Activated CD8-positive, alpha-beta T cell treated with anti-CD3 and anti-CD28 coated beads for 36 hours (primary cell): ENCODE measurements at regions of chr1 and their contacts with region 1.

Region 1: DNA sequence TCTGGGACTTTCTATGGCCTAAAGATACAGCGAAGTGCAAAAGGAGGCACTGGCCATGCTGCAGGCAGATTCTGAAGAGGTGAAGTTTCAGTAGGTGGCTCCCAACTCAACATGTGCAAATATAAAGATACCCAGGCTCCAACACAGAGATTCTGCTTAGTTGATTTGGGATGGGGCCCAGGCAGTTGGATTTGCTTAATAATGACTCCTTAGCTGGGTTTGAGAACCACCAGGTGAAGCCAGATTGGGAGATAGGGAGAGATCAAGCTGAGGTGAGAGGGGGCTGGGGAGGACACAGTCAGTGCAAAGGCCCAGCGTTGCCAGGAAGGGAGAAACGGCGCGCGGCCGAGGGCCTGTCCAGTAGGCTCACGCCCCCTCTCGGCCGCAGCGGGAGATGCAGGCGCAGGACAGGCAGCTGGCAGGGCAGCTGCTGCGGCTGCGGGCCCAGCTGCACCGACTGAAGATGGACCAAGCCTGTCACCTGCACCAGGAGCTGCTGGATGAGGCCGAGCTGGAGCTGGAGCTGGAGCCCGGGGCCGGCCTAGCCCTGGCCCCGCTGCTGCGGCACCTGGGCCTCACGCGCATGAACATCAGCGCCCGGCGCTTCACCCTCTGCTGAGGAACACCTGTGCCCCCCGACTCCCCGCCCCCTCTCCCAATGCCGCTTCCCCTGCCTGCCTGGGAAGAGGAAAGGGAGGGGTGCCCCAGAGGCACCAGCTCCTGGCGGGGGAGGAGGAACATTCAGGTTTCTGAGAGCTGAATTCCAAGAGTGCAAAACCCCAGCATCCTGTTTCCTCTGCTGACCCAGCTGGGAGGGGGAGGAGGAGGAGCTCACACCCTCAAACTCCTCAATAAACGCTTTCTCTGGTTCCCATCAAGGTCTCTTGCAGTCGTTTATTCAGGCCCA is 1.2 kb downstream of the FAM167B start:
- DNase-seq: peak; percentile 92
- ATAC-seq: peak; percentile 21
- H3K4me3 Mint-ChIP-seq: peak overlapping the region; percentile 50
- H3K27ac Mint-ChIP-seq: peak overlapping the region; percentile 99
- H3K4me1 Mint-ChIP-seq: peaks cover 41% of the 10 kb centered on the region
- H3K27me3 Mint-ChIP-seq: no peaks in the 10 kb centered on the region
- CTCF ChIP-seq: peak; percentile 96

Region 2: DNA sequence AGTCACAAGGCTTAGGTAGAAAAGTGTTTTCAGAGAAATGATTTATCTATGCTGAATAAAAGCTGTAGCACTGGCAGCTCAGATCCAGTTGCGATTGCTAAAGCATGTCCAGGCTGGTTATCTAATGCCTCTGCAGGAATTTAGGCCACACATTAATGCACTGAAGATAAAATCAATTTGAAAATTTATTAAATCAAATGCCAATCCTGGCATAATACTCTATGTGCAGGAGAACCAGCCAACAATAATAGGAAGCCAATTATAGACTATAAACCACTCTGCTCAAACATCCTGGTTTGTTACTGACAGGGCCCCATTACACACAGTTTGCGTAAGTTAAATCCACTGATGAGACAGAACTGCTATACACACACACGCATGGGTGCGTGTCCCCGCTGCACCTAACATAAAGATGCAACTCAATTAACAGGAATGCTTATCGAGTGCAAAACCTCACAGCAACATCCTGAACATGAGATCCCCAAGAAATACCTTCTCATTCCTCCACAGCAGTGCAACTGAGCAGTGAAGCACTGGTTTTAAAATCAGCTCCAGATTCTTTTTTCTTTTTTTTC is 350.6 kb before region 1 on chr1:
- CTCF ChIA-PET with region 1: no interaction called
- POLR2A ChIA-PET with region 1: no interaction called
- intact Hi-C with region 1: no loop called
- DNase-seq: no peak
- ATAC-seq: no peak
- H3K4me3 Mint-ChIP-seq: no peak overlapping the region
- H3K27ac Mint-ChIP-seq: no peak overlapping the region
- H3K4me1 Mint-ChIP-seq: peaks cover 9% of the 10 kb centered on the region
- H3K27me3 Mint-ChIP-seq: no peaks in the 10 kb centered on the region
- CTCF ChIP-seq: no peak

Region 3: DNA sequence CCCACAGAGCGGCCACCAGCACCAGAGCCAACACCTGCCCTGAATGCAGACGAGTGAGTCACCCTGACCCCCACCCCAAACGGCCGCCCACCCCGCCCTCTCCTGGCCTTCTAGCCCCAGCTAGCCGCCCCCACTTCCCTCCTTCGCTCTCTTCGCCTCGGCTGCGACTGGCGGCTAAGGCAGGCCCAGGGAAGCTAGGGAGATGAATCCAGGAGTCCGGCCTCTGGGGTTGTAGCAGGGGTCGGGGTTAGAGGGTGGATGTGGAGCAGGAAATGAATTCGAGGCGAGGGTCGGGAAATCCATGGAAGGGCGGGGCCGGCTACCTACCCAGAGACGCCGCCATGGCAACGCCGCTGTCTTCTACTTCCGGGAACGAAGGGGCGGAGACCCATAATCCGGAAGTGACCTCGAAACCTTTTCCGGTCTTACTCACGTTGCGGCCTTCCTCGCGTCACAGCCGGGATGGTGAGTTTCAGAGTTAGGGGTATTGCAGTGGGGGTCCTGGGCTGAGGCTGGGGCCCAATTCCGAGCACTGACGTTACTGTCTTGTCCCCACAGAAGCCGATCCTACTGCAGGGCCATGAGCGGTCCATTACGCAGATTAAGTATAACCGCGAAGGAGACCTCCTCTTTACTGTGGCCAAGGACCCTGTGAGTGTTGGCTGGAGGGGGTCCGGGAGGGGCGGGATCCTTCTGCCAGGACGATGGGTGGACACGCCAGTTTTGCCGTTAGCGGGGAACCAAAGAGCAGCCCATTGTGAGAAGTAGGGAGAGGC is 26.1 kb before region 1 on chr1 and contains the starts of genes EIF3I and TMEM234:
- CTCF ChIA-PET with region 1: interaction called, 34 read pairs
- POLR2A ChIA-PET with region 1: interaction called, 8 read pairs
- intact Hi-C with region 1: no loop called
- DNase-seq: peak; percentile 96
- ATAC-seq: peak; percentile 95
- H3K4me3 Mint-ChIP-seq: peak within 1 kb of the TSS; percentile 96
- H3K27ac Mint-ChIP-seq: peak within 1 kb of the TSS; percentile 98
- H3K4me1 Mint-ChIP-seq: peaks cover 33% of the 10 kb centered on the region
- H3K27me3 Mint-ChIP-seq: no peaks in the 10 kb centered on the region
- CTCF ChIP-seq: no peak
- total RNA-seq, gene EIF3I: 328 to 335 TPM
- total RNA-seq, gene TMEM234: 6.9 to 7.7 TPM

Region 4: GRCh38 chr1:32273388-32274208 is 25.4 kb after region 1 on chr1:
- CTCF ChIA-PET with region 1: interaction called, 6 read pairs
- POLR2A ChIA-PET with region 1: interaction called, 93 read pairs
- intact Hi-C with region 1: no loop called
- DNase-seq: peak; percentile 95
- ATAC-seq: peak; percentile 93
- H3K4me3 Mint-ChIP-seq: peak overlapping the region; percentile 68
- H3K27ac Mint-ChIP-seq: peak overlapping the region; percentile 89
- H3K4me1 Mint-ChIP-seq: peaks cover 58% of the 10 kb centered on the region
- H3K27me3 Mint-ChIP-seq: no peaks in the 10 kb centered on the region
- CTCF ChIP-seq: no peak

Region 5: DNA sequence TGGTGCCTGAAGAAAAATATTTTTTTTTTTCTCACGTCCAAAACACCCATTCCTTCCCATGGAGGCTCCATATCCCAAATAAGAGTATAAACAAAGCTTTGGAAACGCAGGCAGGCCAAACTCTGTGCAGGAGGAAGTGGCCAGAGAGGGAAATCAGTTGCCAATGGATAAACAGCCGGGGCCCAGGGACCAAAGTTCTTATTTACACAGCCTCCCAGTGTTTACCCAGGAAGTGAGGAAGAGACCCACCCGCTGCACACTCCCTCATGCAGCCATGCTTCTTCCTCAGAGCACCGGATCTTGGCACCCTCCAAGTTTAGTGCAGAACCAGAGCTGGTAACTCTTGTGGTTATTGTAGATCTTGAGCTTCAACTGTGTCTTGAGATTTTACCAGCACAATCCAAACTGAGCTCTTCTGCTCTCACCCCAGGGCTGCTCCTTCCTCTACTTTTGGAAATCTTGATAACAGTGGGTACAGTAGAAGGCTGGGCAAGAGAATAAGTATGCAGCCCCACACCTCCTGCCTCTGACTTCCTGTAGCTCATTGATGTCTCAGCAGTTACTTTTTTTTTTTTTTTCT is 73.6 kb after region 1 on chr1:
- CTCF ChIA-PET with region 1: interaction called, 10 read pairs
- POLR2A ChIA-PET with region 1: interaction called, 6 read pairs
- intact Hi-C with region 1: no loop called
- DNase-seq: peak; percentile 32
- ATAC-seq: peak; percentile 65
- H3K4me3 Mint-ChIP-seq: peak overlapping the region; percentile 0
- H3K27ac Mint-ChIP-seq: peak overlapping the region; percentile 81
- H3K4me1 Mint-ChIP-seq: peaks cover 40% of the 10 kb centered on the region
- H3K27me3 Mint-ChIP-seq: no peaks in the 10 kb centered on the region
- CTCF ChIP-seq: no peak